Panc1 (cell line): ENCODE measurements at regions of chr1 and their contacts with region 1.

Region 1: DNA sequence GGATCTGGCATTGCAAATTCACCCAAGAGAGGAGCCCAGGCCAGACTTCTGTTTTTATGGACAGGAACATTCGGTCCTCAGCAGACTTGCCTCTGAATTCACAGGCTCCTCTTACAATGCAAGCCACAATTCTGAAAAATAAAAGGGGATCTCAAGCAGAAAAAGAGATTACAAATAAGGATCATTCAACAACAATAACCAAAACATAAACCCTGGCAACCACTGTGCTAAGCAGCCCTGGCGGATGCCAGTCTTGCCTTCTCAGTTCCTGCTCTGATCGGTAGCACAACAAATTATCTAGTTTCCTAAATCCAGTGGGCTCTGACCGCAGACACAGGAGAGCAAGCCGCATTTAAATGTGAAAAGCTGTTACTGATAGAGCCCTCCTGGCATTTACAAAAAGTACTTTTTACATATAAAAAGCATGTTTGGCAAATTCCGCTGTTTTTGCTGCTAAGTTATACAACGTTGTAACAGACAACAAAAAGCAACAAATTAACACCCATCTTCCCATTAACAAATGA is 123.4 kb upstream of the FOXD3 start:
- DNase-seq: no peak
- ATAC-seq: no peak
- H3K4me3 ChIP-seq: no peak overlapping the region
- H3K27ac ChIP-seq: no peak overlapping the region
- H3K4me1 ChIP-seq: no peaks in the 10 kb centered on the region
- H3K27me3 ChIP-seq: peaks cover 17% of the 10 kb centered on the region
- CTCF ChIP-seq: no peak

Region 2: DNA sequence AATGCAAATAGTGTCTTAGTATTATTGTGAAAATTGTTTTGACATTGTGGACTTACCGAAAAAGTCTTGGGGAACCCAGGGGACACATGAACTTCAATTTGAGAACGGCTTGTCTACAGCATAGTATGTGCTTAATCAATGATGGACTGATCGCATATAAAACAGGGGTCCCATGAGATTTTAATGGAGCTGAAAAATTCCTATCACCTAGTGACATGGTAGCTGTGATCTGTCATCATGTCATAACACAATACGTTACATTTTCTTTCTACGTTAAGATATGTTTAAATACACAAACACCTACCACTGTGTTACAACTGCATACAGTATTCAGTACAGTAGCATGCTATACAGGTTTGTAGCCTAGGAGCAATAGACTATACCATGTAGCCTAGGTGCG is 29.9 kb before region 1 on chr1:
- CTCF ChIA-PET with region 1: no interaction called
- POLR2A ChIA-PET with region 1: no interaction called
- in situ Hi-C with region 1: no loop called
- intact Hi-C with region 1: loop called (anchors 1 kb)
- DNase-seq: no peak
- ATAC-seq: no peak
- H3K4me3 ChIP-seq: no peak overlapping the region
- H3K27ac ChIP-seq: no peak overlapping the region
- H3K4me1 ChIP-seq: no peaks in the 10 kb centered on the region
- H3K27me3 ChIP-seq: peaks cover 16% of the 10 kb centered on the region
- CTCF ChIP-seq: no peak